ENCODE measurements at regions of chr10 and their contacts with region 1.

Region 1: GRCh38 chr10:45672181-45673073 is at the start of gene ZFAND4:
- DNase-seq: peak; percentile 97
- H3K4me3 Mint-ChIP-seq: peak within 1 kb of the TSS; percentile 90
- H3K27ac Mint-ChIP-seq: peak within 1 kb of the TSS; percentile 68
- H3K4me1 Mint-ChIP-seq: peaks cover 8% of the 10 kb centered on the region
- H3K27me3 Mint-ChIP-seq: no peaks in the 10 kb centered on the region
- CTCF ChIP-seq: peak; percentile 51
- total RNA-seq, gene ZFAND4: 6.7 and 7.5 TPM in 2 replicates

Region 2: DNA sequence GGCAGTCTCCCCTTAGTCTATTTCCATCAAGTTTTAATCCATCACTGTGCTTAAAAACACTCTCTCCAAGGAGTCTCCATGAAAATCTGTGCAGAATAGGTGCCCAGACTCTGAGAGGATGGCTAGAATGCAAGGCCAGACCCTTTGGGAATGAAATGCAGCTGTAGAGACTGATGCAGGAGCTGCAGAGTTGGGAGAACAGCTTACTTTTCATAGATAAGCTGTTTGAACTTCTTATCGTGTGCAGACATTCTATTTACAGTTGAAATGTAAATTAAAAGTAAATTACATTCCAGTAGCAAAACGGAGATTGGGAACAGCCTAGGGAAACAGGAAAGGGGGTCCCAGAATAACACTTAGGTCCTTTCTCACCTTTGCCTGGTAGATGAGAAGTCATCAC is 656.8 kb before region 1 on chr10:
- CTCF ChIA-PET with region 1: no interaction called
- intact Hi-C with region 1: loop called (anchors 5 kb)
- DNase-seq: no peak
- H3K4me3 Mint-ChIP-seq: no peak overlapping the region
- H3K27ac Mint-ChIP-seq: no peak overlapping the region
- H3K4me1 Mint-ChIP-seq: no peaks in the 10 kb centered on the region
- H3K27me3 Mint-ChIP-seq: peaks cover 75% of the 10 kb centered on the region
- CTCF ChIP-seq: no peak

Region 3: GRCh38 chr10:45249978-45250693 is 422.3 kb before region 1 on chr10:
- CTCF ChIA-PET with region 1: interaction called, 4 read pairs
- intact Hi-C with region 1: loop called (anchors 2 kb)
- DNase-seq: peak; percentile 4
- H3K4me3 Mint-ChIP-seq: peak overlapping the region; percentile 49
- H3K27ac Mint-ChIP-seq: no peak overlapping the region
- H3K4me1 Mint-ChIP-seq: no peaks in the 10 kb centered on the region
- H3K27me3 Mint-ChIP-seq: peaks cover 45% of the 10 kb centered on the region
- CTCF ChIP-seq: peak; percentile 31

Region 4: GRCh38 chr10:45464958-45465567 is 207.4 kb before region 1 on chr10:
- CTCF ChIA-PET with region 1: interaction called, 14 read pairs
- intact Hi-C with region 1: loop called (anchors 1 kb)
- DNase-seq: peak; percentile 84
- H3K4me3 Mint-ChIP-seq: no peak overlapping the region
- H3K27ac Mint-ChIP-seq: no peak overlapping the region
- H3K4me1 Mint-ChIP-seq: no peaks in the 10 kb centered on the region
- H3K27me3 Mint-ChIP-seq: no peaks in the 10 kb centered on the region
- CTCF ChIP-seq: peak; percentile 86

Measured in Calu3 (cell line).